ENCODE measurements at regions of chr10 and their contacts with region 1.

Region 1: GRCh38 chr10:103895411-103896186 is 22.4 kb downstream of the STN1 start:
- DNase-seq: peak; percentile 97
- ATAC-seq: peak; percentile 83
- H3K4me3 ChIP-seq: peak overlapping the region in 1 of 2 experiments; percentile 17; a peak in 2 of 4 replicates
- H3K27ac ChIP-seq: peak overlapping the region; percentile 84
- H3K4me1 ChIP-seq: peaks cover 87 to 92% of the 10 kb centered on the region in 2 experiments
- H3K27me3 ChIP-seq: no peaks in the 10 kb centered on the region
- CTCF ChIP-seq: no peak
- POLR2A ChIP-seq: no peak
- RAD21 ChIP-seq: no peak

Region 2: GRCh38 chr10:103645141-103646054 is 250.2 kb before region 1 on chr10:
- CTCF ChIA-PET with region 1: no interaction called
- POLR2A ChIA-PET with region 1: no interaction called
- RAD21 ChIA-PET with region 1: no interaction called
- intact Hi-C with region 1: no loop called
- DNase-seq: no peak
- ATAC-seq: no peak
- H3K4me3 ChIP-seq: no peak overlapping the region
- H3K27ac ChIP-seq: no peak overlapping the region
- H3K4me1 ChIP-seq: peaks cover 3 to 9% of the 10 kb centered on the region in 2 experiments; a peak in 3 of 4 replicates
- H3K27me3 ChIP-seq: no peaks in the 10 kb centered on the region
- CTCF ChIP-seq: no peak
- POLR2A ChIP-seq: no peak
- RAD21 ChIP-seq: no peak

Region 3: DNA sequence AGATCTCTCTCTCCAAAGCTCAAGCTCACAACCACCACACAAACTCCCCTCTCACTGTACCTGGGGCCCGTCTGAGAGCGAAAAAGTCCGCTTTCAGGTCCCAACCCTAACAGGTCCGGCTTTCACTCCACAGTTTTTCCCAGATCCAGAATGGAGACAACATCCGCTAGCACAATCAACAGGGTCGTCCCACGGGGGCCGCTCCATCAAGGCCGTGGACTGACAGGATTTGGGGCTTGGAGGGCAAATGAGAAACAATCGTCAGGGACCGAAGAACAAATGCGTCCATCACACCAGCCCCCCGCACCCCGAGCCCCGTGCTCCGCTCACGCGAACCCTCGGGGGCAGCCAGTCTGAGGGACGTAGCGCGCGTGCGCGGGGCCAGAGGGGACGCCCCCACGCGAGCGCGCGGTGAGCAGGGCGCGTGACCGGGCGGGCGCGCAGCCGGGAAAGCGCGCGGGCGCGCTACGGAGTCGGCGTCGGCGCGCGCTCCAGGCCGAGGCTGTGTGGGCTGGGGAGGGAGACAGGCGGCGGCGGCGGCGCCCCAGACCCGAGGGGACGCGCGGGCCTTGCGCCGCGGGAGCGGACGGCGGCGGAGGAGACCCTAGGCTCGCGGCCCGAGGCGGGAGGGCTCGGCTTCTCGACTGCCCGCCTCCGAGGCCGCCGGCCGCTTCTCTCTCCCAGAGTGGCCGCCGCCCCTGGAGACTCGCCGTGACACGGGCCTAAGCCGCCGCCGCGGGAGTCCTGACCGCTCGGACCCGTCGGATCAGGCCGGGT is 71.3 kb after region 1 on chr10 and contains the start of gene SLK:
- CTCF ChIA-PET with region 1: no interaction called
- POLR2A ChIA-PET with region 1: no interaction called
- RAD21 ChIA-PET with region 1: no interaction called
- intact Hi-C with region 1: loop called (anchors 5 kb)
- DNase-seq: peak; percentile 59
- ATAC-seq: peak; percentile 87
- H3K4me3 ChIP-seq: peak within 1 kb of the TSS; percentile 73 to 83
- H3K27ac ChIP-seq: peak within 1 kb of the TSS; percentile 95
- H3K4me1 ChIP-seq: peaks cover 28 to 46% of the 10 kb centered on the region in 2 experiments; a peak in 3 of 4 replicates
- H3K27me3 ChIP-seq: no peaks in the 10 kb centered on the region
- CTCF ChIP-seq: no peak
- POLR2A ChIP-seq: peak; percentile 70
- RAD21 ChIP-seq: no peak
- total RNA-seq, gene SLK: 44.2 TPM

Region 4: DNA sequence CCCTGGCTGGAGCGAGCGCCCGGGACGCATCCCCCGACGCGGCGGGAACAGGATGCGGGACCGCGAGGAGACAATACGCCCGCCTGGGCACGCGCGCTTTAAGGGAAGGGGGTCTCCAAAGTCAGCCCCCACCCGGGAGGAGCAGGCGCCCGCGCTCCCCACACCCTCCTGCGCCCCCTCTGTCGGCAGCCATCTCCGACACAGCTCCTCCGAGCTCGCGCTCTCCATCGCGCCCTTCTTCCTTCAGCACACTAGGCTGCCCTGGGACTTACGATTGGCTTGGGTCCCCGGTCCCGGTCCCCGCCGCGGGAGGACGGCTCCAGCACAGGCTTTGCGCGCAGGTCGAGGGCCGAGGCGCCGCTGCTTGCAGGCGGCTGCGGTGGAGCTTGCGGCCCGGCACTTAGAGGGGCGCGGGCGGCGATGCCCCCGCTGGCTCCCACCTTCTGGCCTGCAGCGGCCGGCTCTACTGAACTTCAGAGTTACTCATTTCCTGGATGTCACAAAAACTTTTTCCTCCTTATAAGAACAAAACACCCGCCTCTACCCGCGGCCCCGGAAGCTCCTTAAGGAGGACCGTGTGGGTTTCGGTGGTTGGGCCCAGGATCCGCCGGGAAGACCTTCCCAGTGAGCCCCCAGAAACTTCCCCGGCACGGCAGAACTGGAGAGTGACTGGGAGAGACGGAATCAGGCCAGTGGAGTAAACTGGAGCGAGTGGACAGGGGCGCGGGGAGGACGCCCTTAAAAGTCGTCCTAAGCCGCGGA is 442.6 kb after region 1 on chr10 and contains the start of gene ITPRIP:
- CTCF ChIA-PET with region 1: no interaction called
- POLR2A ChIA-PET with region 1: no interaction called
- RAD21 ChIA-PET with region 1: no interaction called
- intact Hi-C with region 1: loop called (anchors 10 kb)
- DNase-seq: peak; percentile 69
- ATAC-seq: peak; percentile 73
- H3K4me3 ChIP-seq: peak within 1 kb of the TSS; percentile 76 to 95
- H3K27ac ChIP-seq: peak within 1 kb of the TSS; percentile 85
- H3K4me1 ChIP-seq: peaks cover 37 to 57% of the 10 kb centered on the region in 2 experiments
- H3K27me3 ChIP-seq: no peaks in the 10 kb centered on the region
- CTCF ChIP-seq: peak in 2 of 3 experiments; percentile 29 to 34; a peak in 3 of 6 replicates
- POLR2A ChIP-seq: peak; percentile 87
- RAD21 ChIP-seq: no peak
- total RNA-seq, gene ITPRIP: 12.0 TPM